Caco-2 (cell line): ENCODE measurements at regions of chr10 and their contacts with region 1.

Region 1: GRCh38 chr10:116796910-116797513 is 52.3 kb upstream of the ENO4 start:
- DNase-seq: peak; percentile 75 to 84
- H3K4me3 ChIP-seq: no peak overlapping the region
- H3K4me3 Mint-ChIP-seq: no peak overlapping the region
- H3K27ac Mint-ChIP-seq: no peak overlapping the region
- H3K4me1 ChIP-seq: no peaks in the 10 kb centered on the region
- H3K4me1 Mint-ChIP-seq: no peaks in the 10 kb centered on the region
- H3K27me3 ChIP-seq: no peaks in the 10 kb centered on the region
- H3K27me3 Mint-ChIP-seq: peaks cover 13% of the 10 kb centered on the region
- CTCF ChIP-seq: peak; percentile 87 to 97

Region 2: GRCh38 chr10:116836902-116837523 is 40.0 kb after region 1 on chr10:
- CTCF ChIA-PET with region 1: interaction called, 5 read pairs
- POLR2A ChIA-PET with region 1: no interaction called
- intact Hi-C with region 1: loop called (anchors 2 kb)
- DNase-seq: no peak
- H3K4me3 ChIP-seq: no peak overlapping the region
- H3K4me3 Mint-ChIP-seq: no peak overlapping the region
- H3K27ac Mint-ChIP-seq: no peak overlapping the region
- H3K4me1 ChIP-seq: 0 out of 2 replicates have a peak, but pooled peaks cover 15% of the 10 kb centered on the region
- H3K4me1 Mint-ChIP-seq: no peaks in the 10 kb centered on the region
- H3K27me3 ChIP-seq: no peaks in the 10 kb centered on the region
- H3K27me3 Mint-ChIP-seq: no peaks in the 10 kb centered on the region
- CTCF ChIP-seq: peak in 1 of 2 experiments; percentile 26

Region 3: DNA sequence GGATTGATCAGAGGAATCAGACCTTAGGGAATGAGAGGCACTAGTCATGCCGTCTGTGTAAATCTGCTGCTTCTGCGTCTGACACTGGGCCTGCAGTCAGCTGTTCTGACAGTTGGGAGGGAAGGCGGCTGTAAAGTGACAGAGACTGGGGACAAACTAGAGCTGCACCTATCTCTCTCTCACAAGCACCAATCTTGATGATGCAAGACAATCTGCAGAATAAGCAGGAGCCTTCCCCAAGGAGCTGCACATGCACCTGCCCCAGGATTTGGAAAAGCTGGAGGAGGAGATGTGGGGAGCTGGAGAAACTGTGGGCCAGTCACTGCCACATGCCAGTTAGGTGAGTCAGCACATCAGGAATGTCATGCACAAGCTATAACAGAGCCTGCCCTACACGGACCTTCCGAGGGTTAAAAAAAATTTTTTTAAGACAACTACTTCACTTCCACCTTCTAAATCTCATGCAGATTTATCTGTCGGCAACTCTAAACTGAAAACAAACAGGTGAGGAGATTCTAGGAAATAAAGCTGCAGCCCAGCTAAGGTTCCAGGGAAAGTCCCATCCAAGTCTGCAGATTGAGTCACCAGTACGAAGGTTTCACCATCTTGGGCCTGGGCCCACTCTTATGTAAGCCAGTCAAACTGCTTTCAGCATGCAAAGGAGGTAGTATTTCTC is 91.5 kb after region 1 on chr10:
- CTCF ChIA-PET with region 1: interaction called, 6 read pairs
- POLR2A ChIA-PET with region 1: no interaction called
- intact Hi-C with region 1: loop called (anchors 5 kb)
- DNase-seq: peak; percentile 49 to 60
- H3K4me3 ChIP-seq: no peak overlapping the region
- H3K4me3 Mint-ChIP-seq: no peak overlapping the region
- H3K27ac Mint-ChIP-seq: peak overlapping the region; percentile 51
- H3K4me1 ChIP-seq: peaks cover 16% of the 10 kb centered on the region
- H3K4me1 Mint-ChIP-seq: peaks cover 19% of the 10 kb centered on the region
- H3K27me3 ChIP-seq: no peaks in the 10 kb centered on the region
- H3K27me3 Mint-ChIP-seq: no peaks in the 10 kb centered on the region
- CTCF ChIP-seq: no peak